ENCODE measurements at regions of chr20 and their contacts with region 1.

Region 1: GRCh38 chr20:3010985-3011723 is 32.3 kb upstream of the GNRH2 start:
- DNase-seq: no peak
- H3K4me3 Mint-ChIP-seq: no peak overlapping the region
- H3K27ac Mint-ChIP-seq: peak overlapping the region; percentile 85
- H3K4me1 Mint-ChIP-seq: peaks cover 46% of the 10 kb centered on the region
- H3K27me3 Mint-ChIP-seq: no peaks in the 10 kb centered on the region

Region 2: DNA sequence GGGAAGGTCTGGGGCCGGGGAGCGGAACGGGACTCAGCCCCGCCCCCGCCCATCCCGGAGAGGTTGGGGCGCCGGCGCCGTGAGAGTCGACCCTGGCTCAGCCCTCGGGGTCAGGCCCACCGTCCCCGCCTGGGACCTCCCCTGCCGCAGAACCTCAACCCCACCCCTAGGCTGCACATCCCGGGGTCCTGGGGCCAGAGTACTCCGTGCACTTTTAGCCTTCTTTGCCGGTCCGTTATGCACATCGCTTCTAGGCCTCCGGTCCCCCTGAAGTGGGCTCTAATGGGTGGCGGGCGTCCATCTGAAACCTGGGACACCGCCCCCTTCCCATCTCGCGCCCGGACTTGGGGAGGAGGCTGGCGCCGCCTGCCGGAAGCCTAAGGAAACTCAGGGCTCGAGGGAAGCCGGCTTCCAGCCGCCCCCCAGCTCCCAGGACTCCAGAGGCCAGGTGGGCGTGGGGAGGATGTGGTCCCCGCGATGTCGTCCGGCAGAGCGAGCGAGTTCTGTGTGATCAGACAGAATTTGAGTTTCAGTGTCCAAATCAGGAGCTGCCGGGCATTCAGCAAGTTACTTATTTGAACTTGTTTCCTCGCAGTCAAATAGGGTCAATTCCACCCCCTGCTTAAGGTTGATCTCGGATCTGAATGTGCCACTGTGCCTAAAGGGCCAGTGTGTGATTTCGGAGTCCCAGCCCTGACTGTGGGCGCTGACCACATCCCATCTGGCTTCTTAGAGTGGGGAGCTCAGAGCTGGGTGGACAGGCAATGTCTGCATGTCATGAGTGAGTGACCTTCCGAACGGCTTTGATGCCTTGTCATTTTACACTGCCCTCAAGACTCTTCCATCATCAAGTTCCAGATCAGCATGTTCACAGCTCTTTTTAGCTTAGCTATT is 258.3 kb before region 1 on chr20:
- intact Hi-C with region 1: loop called (anchors 5 kb)
- DNase-seq: no peak
- H3K4me3 Mint-ChIP-seq: peak overlapping the region; percentile 79
- H3K27ac Mint-ChIP-seq: no peak overlapping the region
- H3K4me1 Mint-ChIP-seq: peaks cover 22% of the 10 kb centered on the region
- H3K27me3 Mint-ChIP-seq: peaks cover 43% of the 10 kb centered on the region

Region 3: GRCh38 chr20:2814587-2815051 is 196.5 kb before region 1 on chr20 and contains the start of gene C20orf141:
- intact Hi-C with region 1: no loop called
- DNase-seq: no peak
- H3K4me3 Mint-ChIP-seq: no peak within 1 kb of the TSS
- H3K27ac Mint-ChIP-seq: no peak within 1 kb of the TSS
- H3K4me1 Mint-ChIP-seq: peaks cover 6% of the 10 kb centered on the region
- H3K27me3 Mint-ChIP-seq: peaks cover 43% of the 10 kb centered on the region
- total RNA-seq, gene C20orf141: not detected in 2 replicates

Region 4: GRCh38 chr20:2914160-2914559 is 97.0 kb before region 1 on chr20:
- intact Hi-C with region 1: loop called (anchors 1 kb)
- DNase-seq: no peak
- H3K4me3 Mint-ChIP-seq: no peak overlapping the region
- H3K27ac Mint-ChIP-seq: no peak overlapping the region
- H3K4me1 Mint-ChIP-seq: peaks cover 8% of the 10 kb centered on the region
- H3K27me3 Mint-ChIP-seq: no peaks in the 10 kb centered on the region

Region 5: DNA sequence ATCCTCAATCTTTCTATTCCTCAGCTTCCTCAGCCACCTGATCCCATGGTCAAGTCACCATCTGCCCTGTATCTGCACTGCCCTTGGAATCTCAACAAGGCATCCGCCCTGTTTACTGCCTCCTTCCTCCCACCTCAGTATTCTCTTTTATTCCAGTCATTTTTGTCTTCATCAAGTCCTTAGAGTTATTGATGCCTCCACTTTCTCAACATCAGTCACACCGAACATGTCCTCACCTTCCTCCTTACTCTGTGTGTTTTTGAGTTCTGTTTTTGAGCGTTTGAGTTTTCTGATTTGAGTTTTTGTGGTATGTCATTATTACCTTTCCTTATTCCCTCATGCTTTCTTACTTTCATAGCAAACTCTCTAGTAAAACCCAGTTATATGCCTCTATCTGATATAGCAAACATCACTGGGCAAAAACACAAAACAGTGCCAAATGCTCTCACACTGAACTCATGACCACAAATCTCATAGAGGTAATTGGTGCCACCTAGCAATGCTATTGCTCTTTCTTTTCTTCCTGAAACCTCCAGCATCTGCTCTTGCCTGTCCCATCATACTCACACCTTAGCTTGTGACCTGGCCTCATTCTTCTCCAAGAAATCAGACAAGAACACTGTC is 20.5 kb after region 1 on chr20:
- intact Hi-C with region 1: loop called (anchors 1 kb)
- DNase-seq: no peak
- H3K4me3 Mint-ChIP-seq: no peak overlapping the region
- H3K27ac Mint-ChIP-seq: no peak overlapping the region
- H3K4me1 Mint-ChIP-seq: peaks cover 5% of the 10 kb centered on the region
- H3K27me3 Mint-ChIP-seq: no peaks in the 10 kb centered on the region

Region 6: DNA sequence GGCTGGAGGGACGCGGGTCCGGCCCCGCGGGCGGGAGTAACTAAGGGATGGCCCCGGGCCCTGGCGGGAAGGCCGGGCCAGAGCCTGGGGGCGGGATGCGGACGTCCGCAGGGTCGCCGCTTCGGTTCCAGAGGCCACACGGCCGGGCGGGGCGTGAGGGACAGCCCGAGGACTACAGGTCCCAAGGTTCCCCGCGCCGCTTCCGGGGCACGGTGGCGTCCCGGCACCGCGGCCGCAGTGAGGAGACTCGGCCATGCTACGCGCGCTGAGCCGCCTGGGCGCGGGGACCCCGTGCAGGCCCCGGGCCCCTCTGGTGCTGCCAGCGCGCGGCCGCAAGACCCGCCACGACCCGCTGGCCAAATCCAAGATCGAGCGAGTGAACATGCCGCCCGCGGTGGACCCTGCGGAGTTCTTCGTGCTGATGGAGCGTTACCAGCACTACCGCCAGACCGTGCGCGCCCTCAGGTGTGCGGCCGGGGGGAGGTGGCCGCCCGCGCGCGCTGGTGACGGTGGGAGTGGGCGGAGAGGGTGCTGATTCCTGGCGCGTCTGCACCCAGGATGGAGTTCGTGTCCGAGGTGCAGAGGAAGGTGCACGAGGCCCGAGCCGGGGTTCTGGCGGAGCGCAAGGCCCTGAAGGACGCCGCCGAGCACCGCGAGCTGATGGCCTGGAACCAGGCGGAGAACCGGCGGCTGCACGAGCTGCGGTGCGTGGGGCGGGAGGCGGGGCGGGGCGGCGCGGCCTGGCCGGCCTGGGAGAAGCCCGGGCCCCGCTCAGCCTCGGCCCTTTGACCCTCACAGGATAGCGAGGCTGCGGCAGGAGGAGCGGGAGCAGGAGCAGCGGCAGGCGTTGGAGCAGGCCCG is 34.9 kb after region 1 on chr20 and contains the start of gene MRPS26:
- intact Hi-C with region 1: loop called (anchors 1 kb)
- DNase-seq: peak; percentile 80
- H3K4me3 Mint-ChIP-seq: peak within 1 kb of the TSS; percentile 95
- H3K27ac Mint-ChIP-seq: peak within 1 kb of the TSS; percentile 78
- H3K4me1 Mint-ChIP-seq: peaks cover 11% of the 10 kb centered on the region
- H3K27me3 Mint-ChIP-seq: no peaks in the 10 kb centered on the region
- total RNA-seq, gene MRPS26: 106 and 114 TPM in 2 replicates

Measured in activated T-helper 1 cell treated with anti-CD3 and anti-CD28 coated beads, Interleukin-12 subunit alpha, Interleukin-12 subunit beta, Interleukin-2, Interleukin-4 antibody, amounts not matched to agents 30 ng/mL and 10 ng/mL and 1 ng/mL, durations not matched to agents 14 hours and 24 hours and 36 hours (primary cell).